Psoas muscle (tissue), 8 donors: ENCODE measurements at regions of chr14 and their contacts with region 1.

Region 1: DNA sequence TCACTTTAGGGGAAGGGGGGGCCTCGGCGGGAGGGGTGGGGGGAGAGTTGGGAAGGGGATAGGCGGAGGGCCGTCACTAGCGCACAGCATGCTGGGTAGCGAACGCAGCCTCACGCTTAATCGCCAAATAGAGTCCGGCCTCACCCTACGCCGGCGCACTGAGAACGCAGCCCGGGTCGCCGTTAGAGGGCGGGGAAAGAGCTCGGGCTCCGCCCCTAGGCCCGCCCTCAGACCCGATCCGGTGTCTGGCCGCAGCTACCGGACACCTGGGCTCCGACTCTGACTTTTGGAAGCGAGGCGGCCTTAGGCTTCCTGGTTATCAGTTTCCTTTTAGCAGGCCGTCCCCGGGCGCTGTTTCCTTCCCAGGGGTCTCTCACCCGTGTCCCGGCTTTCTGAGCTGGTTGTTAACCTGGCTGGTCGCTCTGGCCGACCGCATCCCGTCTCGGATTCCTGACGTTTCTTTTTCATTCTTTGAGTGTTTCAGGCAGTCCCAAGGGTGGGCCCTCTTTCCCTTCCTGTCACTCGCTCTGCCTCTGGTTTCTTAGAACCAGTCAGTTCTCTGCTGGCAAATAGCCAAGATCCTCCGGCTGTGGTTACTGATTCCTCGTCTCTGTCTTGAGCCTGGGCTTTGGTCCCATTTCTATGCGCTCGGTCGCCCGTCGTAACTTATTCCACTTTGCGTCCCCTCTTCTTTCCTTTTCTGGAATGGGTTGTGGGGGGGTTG is 378 bp upstream of the STRN3 start:
- DNase-seq: peak; percentile 96 to 98
- ATAC-seq: peak; percentile 93 to 98 (median 96)
- H3K4me3 ChIP-seq: peak overlapping the region; percentile 98
- H3K27ac ChIP-seq: peak overlapping the region; percentile 100
- H3K4me1 ChIP-seq: peaks cover 26% of the 10 kb centered on the region
- H3K27me3 ChIP-seq: no peaks in the 10 kb centered on the region
- CTCF ChIP-seq: no peak

Region 2: GRCh38 chr14:30982533-30982932 is 44.0 kb before region 1 on chr14:
- intact Hi-C with region 1: loop called in 1 of 2 experiments (anchors 5 kb)
- DNase-seq: no peak
- ATAC-seq: no peak
- H3K4me3 ChIP-seq: no peak overlapping the region
- H3K27ac ChIP-seq: peak overlapping the region; percentile 15
- H3K4me1 ChIP-seq: peaks cover 14% of the 10 kb centered on the region
- H3K27me3 ChIP-seq: no peaks in the 10 kb centered on the region
- CTCF ChIP-seq: no peak

Region 3: DNA sequence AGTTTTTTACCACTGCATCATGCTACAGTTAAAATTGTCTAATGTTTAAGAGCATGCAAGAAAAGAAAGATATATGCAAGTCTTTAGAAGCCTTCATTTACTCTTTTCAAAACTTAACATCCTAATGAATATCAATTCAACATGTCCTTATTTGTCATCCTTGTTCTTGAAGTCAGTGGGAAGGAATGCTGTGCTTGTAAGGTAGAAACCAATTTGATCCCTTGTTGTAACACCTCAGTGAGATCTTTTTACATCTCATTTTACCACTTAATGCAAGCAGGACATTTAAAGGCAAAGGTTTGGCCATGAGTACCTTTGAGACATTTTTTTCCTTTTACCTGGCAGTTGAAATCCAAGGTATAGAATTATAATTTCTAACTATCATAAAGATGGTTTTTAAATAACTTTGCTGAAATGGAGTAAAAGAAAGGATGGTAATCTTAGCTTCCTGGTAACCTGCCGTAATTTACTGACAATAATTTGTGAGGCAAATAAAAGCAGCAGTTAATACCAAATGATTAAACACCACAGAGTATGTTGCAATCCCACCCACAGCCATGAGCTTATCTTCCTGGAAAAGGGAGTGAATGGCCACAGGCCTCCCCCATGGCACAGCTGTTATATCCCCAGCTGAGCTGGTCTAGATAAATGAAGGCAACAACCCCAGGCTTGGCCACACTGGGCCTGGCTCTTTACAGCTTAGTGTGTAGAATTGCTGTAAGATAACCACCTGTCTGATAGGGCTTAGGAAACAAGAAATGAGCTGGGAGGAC is 32.8 kb after region 1 on chr14:
- intact Hi-C with region 1: loop called in 1 of 2 experiments (anchors 2 kb)
- DNase-seq: peak; percentile 51 to 67
- ATAC-seq: peak; percentile 84 to 94 (median 92)
- H3K4me3 ChIP-seq: no peak overlapping the region
- H3K27ac ChIP-seq: peak overlapping the region; percentile 83
- H3K4me1 ChIP-seq: peaks cover 54% of the 10 kb centered on the region
- H3K27me3 ChIP-seq: no peaks in the 10 kb centered on the region
- CTCF ChIP-seq: no peak

Region 4: GRCh38 chr14:31084385-31084784 is 57.8 kb after region 1 on chr14:
- intact Hi-C with region 1: loop called (anchors 5 to 10 kb)
- DNase-seq: peak in 1 of 2 donors; percentile 70
- ATAC-seq: peak in 3 of 4 donors; percentile 40 to 76 (median 59)
- H3K4me3 ChIP-seq: no peak overlapping the region
- H3K27ac ChIP-seq: peak overlapping the region; percentile 54
- H3K4me1 ChIP-seq: no peaks in the 10 kb centered on the region
- H3K27me3 ChIP-seq: no peaks in the 10 kb centered on the region
- CTCF ChIP-seq: no peak

Region 5: GRCh38 chr14:31682768-31683167 is 656.2 kb after region 1 on chr14:
- intact Hi-C with region 1: no loop called
- DNase-seq: no peak
- ATAC-seq: no peak
- H3K4me3 ChIP-seq: no peak overlapping the region
- H3K27ac ChIP-seq: no peak overlapping the region
- H3K4me1 ChIP-seq: no peaks in the 10 kb centered on the region
- H3K27me3 ChIP-seq: no peaks in the 10 kb centered on the region
- CTCF ChIP-seq: no peak